Naive thymus-derived CD4-positive, alpha-beta T cell (primary cell): ENCODE measurements at regions of chrX and their contacts with region 1.

Region 1: DNA sequence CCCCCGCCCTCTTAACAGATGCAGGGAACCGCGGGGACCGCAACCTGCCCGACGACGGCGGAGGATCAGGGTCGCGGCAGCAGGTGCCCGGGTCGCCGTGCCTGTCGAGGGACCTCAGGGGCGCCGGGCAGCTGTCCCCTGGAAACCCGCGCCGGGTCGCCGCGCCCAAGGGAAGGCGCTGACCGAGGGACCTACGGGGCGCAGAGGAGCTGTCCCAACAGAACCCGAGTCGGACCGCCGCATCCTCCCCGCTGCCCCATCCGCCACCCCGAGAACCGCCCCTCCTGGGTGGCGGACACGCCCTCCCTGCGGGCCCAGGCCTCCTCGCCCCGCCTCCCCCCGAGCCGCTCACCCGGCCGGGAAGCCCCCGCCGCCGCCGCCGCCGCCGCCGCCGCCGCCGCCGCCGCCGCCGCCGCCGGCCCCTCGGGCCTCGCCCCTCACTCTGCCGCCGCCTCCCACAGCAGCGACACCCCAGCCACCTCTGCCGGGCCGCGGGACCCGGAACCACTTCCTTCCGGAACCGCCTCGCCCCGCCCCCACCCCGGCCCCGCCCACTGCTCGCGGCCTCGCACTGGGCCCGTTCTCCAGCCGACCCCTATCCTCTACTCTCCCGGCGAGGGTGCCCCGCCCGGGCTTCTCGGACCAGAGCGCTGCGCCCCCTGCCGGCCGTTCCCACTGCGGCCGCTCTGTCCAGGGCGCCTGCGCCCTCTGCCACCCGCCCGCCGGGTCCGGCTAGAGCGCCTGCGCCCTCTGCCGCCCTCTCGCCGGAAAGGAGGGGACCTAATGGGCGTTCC is at the start of gene BCLAF3:
- DNase-seq: peak; percentile 64 to 91 (median 71)
- ATAC-seq: peak; percentile 94
- H3K4me3 ChIP-seq: peak within 1 kb of the TSS; percentile 51
- H3K4me3 Mint-ChIP-seq: peak within 1 kb of the TSS; percentile 82 to 96 (median 90)
- H3K27ac ChIP-seq: peak within 1 kb of the TSS; percentile 71
- H3K27ac Mint-ChIP-seq: peak within 1 kb of the TSS; percentile 79 to 98 (median 92)
- H3K4me1 ChIP-seq: no peaks in the 10 kb centered on the region
- H3K4me1 Mint-ChIP-seq: peaks cover 7 to 30% (median 19%) of the 10 kb centered on the region in 7 donors
- H3K27me3 ChIP-seq: no peaks in the 10 kb centered on the region
- H3K27me3 Mint-ChIP-seq: no peaks in the 10 kb centered on the region
- total RNA-seq, gene BCLAF3: 6.2 to 14.1 (median 11.7) TPM

Region 2: GRCh38 chrX:19544693-19545305 is 446.0 kb before region 1 on chrX:
- CTCF ChIA-PET with region 1: no interaction called
- POLR2A ChIA-PET with region 1: no interaction called
- intact Hi-C with region 1: loop called (anchors 1 to 2 kb)
- DNase-seq: peak in 8 of 9 donors; percentile 9 to 43 (median 30)
- ATAC-seq: peak; percentile 76
- H3K4me3 ChIP-seq: no peak overlapping the region
- H3K4me3 Mint-ChIP-seq: no peak overlapping the region
- H3K27ac ChIP-seq: no peak overlapping the region
- H3K27ac Mint-ChIP-seq: peak overlapping the region in 5 of 9 donors; percentile 40 to 83 (median 72)
- H3K4me1 ChIP-seq: no peaks in the 10 kb centered on the region
- H3K4me1 Mint-ChIP-seq: peaks cover 0 to 12% (median 3%) of the 10 kb centered on the region in 7 donors
- H3K27me3 ChIP-seq: no peaks in the 10 kb centered on the region
- H3K27me3 Mint-ChIP-seq: no peaks in the 10 kb centered on the region

Region 3: DNA sequence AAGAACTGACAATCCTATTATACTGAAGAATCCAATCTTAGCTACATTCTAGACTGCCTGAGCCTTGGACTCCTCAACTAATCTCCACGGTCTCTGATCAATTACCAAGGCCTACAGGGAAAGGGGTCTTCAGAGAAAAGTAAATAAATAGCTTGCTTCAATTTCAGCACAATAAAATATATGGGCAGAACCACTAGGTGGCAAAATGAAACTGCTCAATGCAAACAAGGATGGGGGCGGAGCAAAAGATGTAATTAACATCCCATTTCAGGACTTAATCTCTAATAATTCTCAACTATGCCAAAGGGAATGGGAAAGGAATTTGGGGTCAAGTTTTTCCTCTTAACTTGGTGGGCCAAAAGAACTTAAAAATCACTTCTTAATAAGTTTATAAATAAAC is 397.1 kb before region 1 on chrX:
- CTCF ChIA-PET with region 1: no interaction called
- POLR2A ChIA-PET with region 1: no interaction called
- intact Hi-C with region 1: loop called (anchors 1 to 2 kb)
- DNase-seq: peak in 7 of 9 donors; percentile 11 to 36 (median 21)
- ATAC-seq: peak; percentile 50
- H3K4me3 ChIP-seq: no peak overlapping the region
- H3K4me3 Mint-ChIP-seq: no peak overlapping the region
- H3K27ac ChIP-seq: no peak overlapping the region
- H3K27ac Mint-ChIP-seq: peak overlapping the region in 3 of 9 donors; percentile 10 to 66 (median 56)
- H3K4me1 ChIP-seq: no peaks in the 10 kb centered on the region
- H3K4me1 Mint-ChIP-seq: peaks cover 0 to 21% (median 10%) of the 10 kb centered on the region in 7 donors
- H3K27me3 ChIP-seq: no peaks in the 10 kb centered on the region
- H3K27me3 Mint-ChIP-seq: no peaks in the 10 kb centered on the region

Region 4: GRCh38 chrX:19739683-19740082 is 251.1 kb before region 1 on chrX:
- CTCF ChIA-PET with region 1: no interaction called
- POLR2A ChIA-PET with region 1: no interaction called
- intact Hi-C with region 1: loop called in 1 of 2 experiments (anchors 10 kb)
- DNase-seq: peak in 4 of 9 donors; percentile 12 to 33 (median 27)
- ATAC-seq: peak; percentile 72
- H3K4me3 ChIP-seq: no peak overlapping the region
- H3K4me3 Mint-ChIP-seq: peak overlapping the region in 7 of 10 donors; percentile 4 to 75 (median 43)
- H3K27ac ChIP-seq: peak overlapping the region; percentile 0
- H3K27ac Mint-ChIP-seq: peak overlapping the region; percentile 34 to 90 (median 82)
- H3K4me1 ChIP-seq: peaks cover 49 to 52% of the 10 kb centered on the region in 2 donors
- H3K4me1 Mint-ChIP-seq: peaks cover 36 to 87% (median 73%) of the 10 kb centered on the region in 7 donors
- H3K27me3 ChIP-seq: no peaks in the 10 kb centered on the region
- H3K27me3 Mint-ChIP-seq: no peaks in the 10 kb centered on the region

Region 5: GRCh38 chrX:19904778-19905367 is 85.9 kb before region 1 on chrX:
- CTCF ChIA-PET with region 1: interaction called, 3 read pairs
- POLR2A ChIA-PET with region 1: no interaction called
- intact Hi-C with region 1: loop called (anchors 1 kb)
- DNase-seq: peak in 6 of 9 donors; percentile 16 to 54 (median 42)
- ATAC-seq: peak; percentile 74
- H3K4me3 ChIP-seq: no peak overlapping the region
- H3K4me3 Mint-ChIP-seq: no peak overlapping the region
- H3K27ac ChIP-seq: no peak overlapping the region
- H3K27ac Mint-ChIP-seq: no peak overlapping the region
- H3K4me1 ChIP-seq: no peaks in the 10 kb centered on the region
- H3K4me1 Mint-ChIP-seq: peaks cover 0 to 17% (median 6%) of the 10 kb centered on the region in 7 donors
- H3K27me3 ChIP-seq: no peaks in the 10 kb centered on the region
- H3K27me3 Mint-ChIP-seq: no peaks in the 10 kb centered on the region

Region 6: DNA sequence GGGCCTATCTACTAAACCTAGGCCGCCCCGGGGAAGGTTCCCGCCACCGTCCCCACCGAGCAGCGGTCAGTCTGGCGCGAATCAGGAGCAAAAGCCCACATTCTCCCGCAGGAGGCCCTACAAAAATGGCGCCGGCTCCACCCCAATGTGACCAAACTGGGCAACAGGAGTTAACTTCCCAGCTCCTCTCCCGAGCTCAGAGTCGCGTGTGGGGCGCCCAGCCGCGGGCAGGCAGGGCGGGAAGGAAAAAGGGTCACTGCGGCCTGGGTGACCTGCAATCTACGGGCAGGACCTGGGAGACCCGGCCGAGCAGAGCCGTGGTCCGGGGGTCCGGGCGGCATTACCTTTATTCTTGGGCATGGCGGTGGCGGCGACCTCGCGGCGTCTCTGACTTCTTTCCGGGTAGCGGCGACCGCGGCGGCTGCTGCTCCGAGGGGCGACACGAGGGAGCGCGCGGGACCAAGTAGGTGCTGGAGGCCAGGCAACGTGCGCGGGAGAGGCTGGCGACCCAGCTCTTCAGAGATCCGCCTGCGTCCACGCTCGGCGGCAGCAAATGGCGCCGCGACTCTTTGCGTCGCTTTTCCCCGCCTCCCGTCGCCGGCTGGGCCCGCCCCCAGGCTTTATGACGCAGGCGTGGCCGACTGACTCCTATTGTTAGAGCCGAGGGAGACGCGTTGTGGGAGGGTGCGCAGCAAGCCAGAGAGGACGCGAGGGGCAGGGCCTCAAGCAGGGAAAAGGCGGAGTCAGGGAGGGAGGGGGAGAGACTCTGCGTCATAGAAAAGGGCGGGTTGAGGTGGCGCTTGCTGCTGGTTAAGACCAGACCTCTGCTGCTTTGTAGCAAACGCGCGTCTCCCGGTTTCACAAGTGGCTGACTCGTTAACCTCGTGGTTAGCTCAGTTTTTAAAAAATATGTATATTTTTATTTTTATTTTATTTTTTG is 150.8 kb after region 1 on chrX and contains the start of gene EIF1AX:
- CTCF ChIA-PET with region 1: no interaction called
- POLR2A ChIA-PET with region 1: no interaction called
- intact Hi-C with region 1: loop called (anchors 1 to 2 kb)
- DNase-seq: peak; percentile 82 to 100 (median 98)
- ATAC-seq: peak; percentile 99
- H3K4me3 ChIP-seq: peak within 1 kb of the TSS; percentile 84
- H3K4me3 Mint-ChIP-seq: peak within 1 kb of the TSS; percentile 80 to 96 (median 88)
- H3K27ac ChIP-seq: peak within 1 kb of the TSS; percentile 93
- H3K27ac Mint-ChIP-seq: peak within 1 kb of the TSS; percentile 68 to 97 (median 89)
- H3K4me1 ChIP-seq: peaks cover 8 to 13% of the 10 kb centered on the region in 2 donors
- H3K4me1 Mint-ChIP-seq: peaks cover 4 to 42% (median 27%) of the 10 kb centered on the region in 7 donors
- H3K27me3 ChIP-seq: no peaks in the 10 kb centered on the region
- H3K27me3 Mint-ChIP-seq: no peaks in the 10 kb centered on the region
- total RNA-seq, gene EIF1AX: 40.2 to 67.5 (median 51.6) TPM